ENCODE measurements at regions of chr9 and their contacts with region 1.

Region 1: DNA sequence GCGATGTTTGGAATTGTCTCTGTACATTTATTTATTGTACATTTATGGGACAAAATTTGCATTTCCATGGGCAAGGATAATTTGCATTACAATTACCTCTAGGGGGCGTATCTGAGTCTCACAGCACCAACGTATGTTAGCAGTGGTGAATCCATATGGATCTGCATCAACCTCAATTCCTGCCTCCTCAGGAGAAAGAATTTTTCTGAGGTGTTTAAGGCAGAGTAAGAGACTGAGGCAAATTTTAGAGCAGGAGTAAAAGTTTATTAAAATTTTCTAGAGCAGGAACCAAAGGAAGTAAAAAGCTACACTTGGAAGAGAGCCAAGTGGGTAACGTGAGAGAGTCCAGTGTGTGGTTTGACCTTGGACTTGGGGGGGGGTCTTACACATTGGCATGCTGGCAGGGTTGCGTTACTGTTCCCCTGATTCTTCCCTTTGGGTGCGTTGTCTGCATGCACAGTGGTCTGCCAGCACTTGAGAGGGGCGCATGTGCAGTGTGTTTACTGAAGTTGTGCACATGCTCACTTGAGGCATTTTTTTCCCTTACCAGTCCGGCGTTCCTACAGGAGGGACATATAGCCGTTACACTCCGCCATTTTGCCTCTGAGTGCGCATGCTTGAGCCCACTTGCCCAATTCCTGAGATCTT is 21.0 kb upstream of the RAB14 start:
- DNase-seq: peak; percentile 30 to 69 (median 36)
- ATAC-seq: peak; percentile 73
- H3K4me3 ChIP-seq: no peak overlapping the region
- H3K27ac ChIP-seq: no peak overlapping the region
- H3K4me1 ChIP-seq: peaks cover 0 to 26% of the 10 kb centered on the region in 2 experiments; a peak in 3 of 5 replicates
- H3K27me3 ChIP-seq: no peaks in the 10 kb centered on the region
- CTCF ChIP-seq: peak; percentile 68 to 80 (median 79)
- EP300 ChIP-seq: no peak
- POLR2A ChIP-seq: no peak
- RAD21 ChIP-seq: peak; percentile 50 to 67

Region 2: DNA sequence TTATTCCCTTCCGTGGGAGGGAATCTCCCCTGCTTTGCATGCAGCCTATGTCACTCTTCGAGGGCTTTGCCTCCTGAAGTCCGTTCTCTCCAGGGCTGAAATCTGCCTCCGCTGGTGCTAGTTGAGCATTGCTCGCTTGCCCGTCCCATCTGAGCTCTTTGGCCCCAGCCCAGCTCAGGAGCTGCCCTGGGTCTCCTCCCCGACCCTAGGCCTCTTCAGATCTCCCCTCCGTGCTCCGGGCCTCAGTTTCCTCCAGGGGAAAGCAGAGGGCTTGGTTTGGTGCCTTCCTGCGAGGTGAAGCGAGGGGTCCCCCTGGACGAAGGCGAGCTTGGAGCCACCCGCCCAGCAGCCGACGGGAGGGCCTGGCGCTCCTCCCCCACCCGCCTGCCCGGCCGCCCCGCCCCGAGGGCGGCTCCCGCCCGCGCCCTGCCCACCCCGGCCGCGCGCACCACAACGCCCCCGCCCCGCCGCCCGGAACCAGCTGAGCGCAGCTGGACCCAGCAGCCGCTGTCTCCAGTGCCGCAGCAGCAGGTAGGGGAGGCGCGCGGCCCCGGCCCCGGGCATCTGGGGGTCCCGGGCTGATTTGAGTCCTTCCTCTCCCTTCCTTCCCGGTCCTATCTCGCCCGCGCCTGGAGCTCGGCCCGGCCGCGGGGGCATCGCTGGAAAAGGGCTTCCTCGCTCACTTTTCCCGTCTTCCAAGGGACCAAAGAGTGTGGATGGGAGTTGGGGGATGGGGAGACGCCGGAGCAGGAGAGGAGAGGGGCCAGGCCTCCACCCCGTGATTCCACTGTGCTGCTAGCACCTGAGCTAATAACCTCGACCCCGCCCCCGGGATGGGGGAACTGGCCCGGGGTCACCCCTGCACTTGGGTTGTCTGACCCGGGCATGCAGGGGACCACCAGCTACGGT is 45.3 kb after region 1 on chr9 and contains the start of gene GSN:
- CTCF ChIA-PET with region 1: interaction called, 3 read pairs
- POLR2A ChIA-PET with region 1: no interaction called
- in situ Hi-C with region 1: no loop called
- intact Hi-C with region 1: loop called (anchors 5 kb)
- DNase-seq: peak; percentile 81 to 97 (median 92)
- ATAC-seq: peak; percentile 97
- H3K4me3 ChIP-seq: peak within 1 kb of the TSS; percentile 62
- H3K27ac ChIP-seq: no peak within 1 kb of the TSS; the same call in 2 of the 3 replicates
- H3K4me1 ChIP-seq: peaks cover 14 to 31% of the 10 kb centered on the region in 2 experiments
- H3K27me3 ChIP-seq: no peaks in the 10 kb centered on the region
- CTCF ChIP-seq: 0 out of 6 replicates have a peak, but pooled peaks of 1 of the 3 experiments have one; percentile 2
- EP300 ChIP-seq: no peak
- POLR2A ChIP-seq: peak; percentile 49; the same call in 1 of the 2 replicates
- RAD21 ChIP-seq: no peak
- polyA plus RNA-seq, gene GSN: 0.39 to 0.41 TPM

Region 3: DNA sequence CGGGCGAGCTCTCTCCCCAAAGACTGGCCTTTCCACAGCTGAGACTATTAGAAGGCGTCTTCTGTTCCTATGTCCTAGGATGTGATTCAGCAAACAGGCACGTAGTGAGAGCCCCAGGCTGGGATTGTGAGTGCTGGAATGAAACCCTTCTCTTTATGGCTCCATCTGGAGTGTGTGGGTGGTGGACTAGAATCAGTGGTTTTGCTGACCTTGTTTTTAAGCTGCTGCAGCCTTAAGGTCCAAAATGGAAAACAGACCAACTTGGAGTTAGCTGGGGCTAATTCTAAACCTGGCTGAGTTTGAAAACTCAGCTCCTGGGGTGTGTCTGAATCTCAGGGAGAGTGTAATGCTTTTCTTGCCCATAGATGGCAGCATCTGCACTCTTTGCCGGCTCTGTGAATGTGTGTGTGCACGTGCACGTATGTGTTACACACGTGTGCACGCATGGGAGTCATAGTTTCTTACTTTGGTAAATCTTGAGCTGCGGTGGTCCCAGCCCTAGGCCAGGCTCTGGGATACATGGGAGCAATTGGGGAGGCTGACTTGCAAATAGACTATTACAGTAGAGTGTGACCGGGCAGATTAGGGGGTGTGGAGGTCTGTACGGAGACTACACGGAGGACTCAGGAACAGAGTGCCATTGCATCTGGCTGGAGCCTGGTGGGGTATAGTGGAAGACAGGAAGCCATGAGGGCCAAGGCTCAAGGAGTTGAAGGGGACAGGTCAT is 56.0 kb after region 1 on chr9:
- CTCF ChIA-PET with region 1: no interaction called
- POLR2A ChIA-PET with region 1: no interaction called
- in situ Hi-C with region 1: no loop called
- intact Hi-C with region 1: loop called (anchors 2 kb)
- DNase-seq: peak; percentile 60 to 81 (median 64)
- ATAC-seq: peak; percentile 90
- H3K4me3 ChIP-seq: no peak overlapping the region
- H3K27ac ChIP-seq: no peak overlapping the region
- H3K4me1 ChIP-seq: peaks cover 32 to 36% of the 10 kb centered on the region in 2 experiments
- H3K27me3 ChIP-seq: no peaks in the 10 kb centered on the region
- CTCF ChIP-seq: peak; percentile 75 to 92 (median 89)
- EP300 ChIP-seq: 0 out of 2 replicates have a peak, but pooled peaks have one; percentile 22
- POLR2A ChIP-seq: no peak
- RAD21 ChIP-seq: peak; percentile 63 to 90

Region 4: GRCh38 chr9:121376214-121376830 is 153.7 kb after region 1 on chr9:
- CTCF ChIA-PET with region 1: no interaction called
- POLR2A ChIA-PET with region 1: no interaction called
- in situ Hi-C with region 1: no loop called
- intact Hi-C with region 1: no loop called
- DNase-seq: no peak
- ATAC-seq: no peak
- H3K4me3 ChIP-seq: no peak overlapping the region
- H3K27ac ChIP-seq: no peak overlapping the region
- H3K4me1 ChIP-seq: peaks cover 3 to 24% of the 10 kb centered on the region in 2 experiments; a peak in 4 of 5 replicates
- H3K27me3 ChIP-seq: no peaks in the 10 kb centered on the region
- CTCF ChIP-seq: peak in 2 of 3 experiments; percentile 11 to 33; a peak in 3 of 6 replicates
- EP300 ChIP-seq: no peak
- POLR2A ChIP-seq: no peak
- RAD21 ChIP-seq: peak; percentile 20 to 45; a peak in 2 of 4 replicates